HepG2 (cell line): ENCODE measurements at regions of chrX and their contacts with region 1.

Region 1: DNA sequence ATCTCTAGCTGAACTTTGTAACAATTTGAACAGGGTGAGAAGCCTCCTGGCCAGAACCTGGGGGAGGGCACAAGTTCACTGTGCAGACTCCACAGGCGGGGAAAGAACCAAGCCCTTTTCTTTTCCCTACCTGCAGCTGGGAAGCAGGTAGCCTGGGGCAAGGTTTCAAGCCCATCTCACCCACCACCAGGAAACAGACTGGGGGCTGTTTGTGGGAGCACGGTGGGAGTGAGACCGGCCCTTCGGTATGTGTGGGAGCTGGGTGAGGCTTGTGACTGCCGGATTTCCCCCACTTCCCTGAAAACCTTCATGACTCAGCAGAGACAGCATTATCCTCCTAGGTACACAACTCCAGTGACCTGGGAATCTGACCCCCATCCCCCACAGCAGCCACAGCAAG is 211.7 kb downstream of the ZNF674 start:
- DNase-seq: no peak
- ATAC-seq: no peak
- H3K4me3 ChIP-seq: no peak overlapping the region
- H3K27ac ChIP-seq: peak overlapping the region; percentile 40
- H3K4me1 ChIP-seq: peaks cover 37% of the 10 kb centered on the region
- H3K27me3 ChIP-seq: no peaks in the 10 kb centered on the region
- CTCF ChIP-seq: no peak
- EP300 ChIP-seq: no peak
- POLR2A ChIP-seq: no peak
- RAD21 ChIP-seq: no peak

Region 2: DNA sequence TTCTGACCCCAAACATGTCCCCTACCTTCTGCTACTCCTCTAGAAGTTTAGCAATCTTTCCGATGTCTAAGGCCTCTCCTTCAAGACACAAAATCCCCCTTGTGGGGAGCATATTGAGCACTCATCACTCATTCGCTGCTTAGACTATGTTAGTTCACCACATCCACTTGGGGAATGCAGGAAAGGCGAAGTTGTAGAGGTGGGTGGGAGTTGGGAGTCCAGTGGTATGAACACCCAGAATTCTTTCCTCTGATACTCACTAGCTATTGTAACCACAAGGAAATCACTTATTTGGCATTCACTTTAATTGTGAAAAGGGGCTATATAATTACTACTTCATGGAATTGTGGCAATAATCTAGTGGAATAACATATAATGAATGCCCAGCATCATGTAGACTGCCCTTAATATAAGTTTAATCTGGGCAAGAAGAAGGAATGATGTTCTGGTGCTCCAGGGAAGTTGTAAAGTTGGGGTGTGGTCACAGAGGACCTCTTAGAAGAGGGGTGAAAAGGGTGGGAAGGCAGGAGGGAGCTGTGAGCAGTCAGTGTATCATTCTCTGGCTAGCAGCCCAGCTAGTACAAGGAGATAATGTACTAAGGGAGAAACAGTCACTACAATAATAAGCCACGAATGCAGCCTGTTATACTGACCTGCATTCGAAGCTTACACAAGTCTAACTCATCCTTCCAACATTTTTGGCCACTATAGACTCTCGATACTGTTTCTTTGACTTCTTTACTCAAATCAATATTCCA is 664.7 kb before region 1 on chrX:
- CTCF ChIA-PET with region 1: no interaction called
- POLR2A ChIA-PET with region 1: no interaction called
- in situ Hi-C with region 1: no loop called
- intact Hi-C with region 1: no loop called
- DNase-seq: no peak
- ATAC-seq: no peak
- H3K4me3 ChIP-seq: no peak overlapping the region
- H3K27ac ChIP-seq: no peak overlapping the region
- H3K4me1 ChIP-seq: no peaks in the 10 kb centered on the region
- H3K27me3 ChIP-seq: no peaks in the 10 kb centered on the region
- CTCF ChIP-seq: no peak
- EP300 ChIP-seq: no peak
- POLR2A ChIP-seq: no peak
- RAD21 ChIP-seq: no peak

Region 3: DNA sequence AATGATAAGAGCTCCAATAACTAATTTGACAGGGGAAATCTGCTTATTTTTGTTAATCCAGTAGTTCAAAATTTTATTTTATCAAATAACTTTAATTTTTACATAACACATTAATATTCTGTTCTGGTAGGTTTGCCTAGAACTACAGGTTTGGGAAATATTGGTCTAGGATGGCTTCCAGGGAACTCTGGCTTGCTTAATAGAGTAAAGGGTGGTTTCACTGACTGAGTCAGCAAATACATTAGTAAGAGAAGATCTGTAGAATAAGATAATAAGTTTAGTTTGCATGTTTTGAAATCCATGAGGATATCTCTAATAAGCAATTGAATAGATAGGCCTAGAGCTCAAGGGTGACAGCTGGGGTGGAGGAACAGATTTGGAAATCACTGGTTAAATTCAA is 289.1 kb before region 1 on chrX:
- CTCF ChIA-PET with region 1: no interaction called
- POLR2A ChIA-PET with region 1: no interaction called
- in situ Hi-C with region 1: no loop called
- intact Hi-C with region 1: no loop called
- DNase-seq: no peak
- ATAC-seq: no peak
- H3K4me3 ChIP-seq: no peak overlapping the region
- H3K27ac ChIP-seq: no peak overlapping the region
- H3K4me1 ChIP-seq: no peaks in the 10 kb centered on the region
- H3K27me3 ChIP-seq: no peaks in the 10 kb centered on the region
- CTCF ChIP-seq: no peak
- EP300 ChIP-seq: no peak
- POLR2A ChIP-seq: no peak
- RAD21 ChIP-seq: no peak

Region 4: DNA sequence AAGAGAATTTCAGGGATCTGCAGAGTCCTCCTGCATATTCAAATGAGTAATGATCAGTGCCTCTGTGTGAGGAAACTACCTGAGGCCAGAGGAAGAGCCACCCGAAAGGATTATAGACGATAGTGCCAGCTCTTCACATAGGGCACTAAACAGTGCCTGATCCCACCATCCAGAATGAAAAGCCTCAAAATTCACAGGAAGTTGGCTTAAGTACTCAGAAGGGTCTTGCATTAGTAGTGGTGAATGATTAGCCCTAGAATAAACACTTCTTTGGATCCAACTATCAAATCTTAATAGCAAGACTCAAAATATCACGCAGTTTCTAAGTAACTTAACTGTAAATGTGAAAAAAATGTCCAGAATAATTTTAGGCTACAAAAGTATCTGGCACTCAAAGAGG is 112.7 kb before region 1 on chrX:
- CTCF ChIA-PET with region 1: no interaction called
- POLR2A ChIA-PET with region 1: no interaction called
- in situ Hi-C with region 1: no loop called
- intact Hi-C with region 1: no loop called
- DNase-seq: peak; percentile 18
- ATAC-seq: peak; percentile 32; the same call in 1 of the 3 replicates
- H3K4me3 ChIP-seq: no peak overlapping the region; a peak in 1 of 6 replicates
- H3K27ac ChIP-seq: no peak overlapping the region
- H3K4me1 ChIP-seq: peaks cover 19% of the 10 kb centered on the region
- H3K27me3 ChIP-seq: no peaks in the 10 kb centered on the region
- CTCF ChIP-seq: no peak
- EP300 ChIP-seq: no peak
- POLR2A ChIP-seq: no peak
- RAD21 ChIP-seq: no peak

Region 5: DNA sequence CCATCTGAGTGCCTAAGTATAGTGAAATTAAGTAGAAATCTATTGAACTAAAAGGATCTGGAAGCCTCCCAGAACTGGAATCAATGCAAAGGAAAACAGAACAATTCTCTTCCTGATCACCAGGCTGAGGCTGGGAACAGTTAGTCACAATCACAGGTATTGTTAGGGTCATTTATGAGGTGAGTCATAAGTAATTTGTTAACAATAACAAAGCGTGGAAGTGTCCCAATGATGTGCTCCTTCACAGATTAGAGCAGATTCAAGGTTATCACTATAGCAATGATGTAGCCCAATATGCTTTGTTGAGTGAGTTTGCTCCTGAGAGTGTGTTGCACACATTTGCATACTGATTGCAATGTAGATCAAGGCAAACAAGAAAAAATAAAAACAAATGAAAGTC is 16.4 kb before region 1 on chrX:
- CTCF ChIA-PET with region 1: no interaction called
- POLR2A ChIA-PET with region 1: interaction called, 11 read pairs
- in situ Hi-C with region 1: no loop called
- intact Hi-C with region 1: no loop called
- DNase-seq: no peak
- ATAC-seq: no peak
- H3K4me3 ChIP-seq: no peak overlapping the region
- H3K27ac ChIP-seq: peak overlapping the region; percentile 22
- H3K4me1 ChIP-seq: peaks cover 76% of the 10 kb centered on the region
- H3K27me3 ChIP-seq: no peaks in the 10 kb centered on the region
- CTCF ChIP-seq: no peak
- EP300 ChIP-seq: no peak
- POLR2A ChIP-seq: no peak
- RAD21 ChIP-seq: no peak